ENCODE measurements at regions of chrX and their contacts with region 1.

Region 1: GRCh38 chrX:40735325-40736169 is at the start of gene MED14:
- DNase-seq: peak; percentile 78 to 98 (median 84)

Region 2: DNA sequence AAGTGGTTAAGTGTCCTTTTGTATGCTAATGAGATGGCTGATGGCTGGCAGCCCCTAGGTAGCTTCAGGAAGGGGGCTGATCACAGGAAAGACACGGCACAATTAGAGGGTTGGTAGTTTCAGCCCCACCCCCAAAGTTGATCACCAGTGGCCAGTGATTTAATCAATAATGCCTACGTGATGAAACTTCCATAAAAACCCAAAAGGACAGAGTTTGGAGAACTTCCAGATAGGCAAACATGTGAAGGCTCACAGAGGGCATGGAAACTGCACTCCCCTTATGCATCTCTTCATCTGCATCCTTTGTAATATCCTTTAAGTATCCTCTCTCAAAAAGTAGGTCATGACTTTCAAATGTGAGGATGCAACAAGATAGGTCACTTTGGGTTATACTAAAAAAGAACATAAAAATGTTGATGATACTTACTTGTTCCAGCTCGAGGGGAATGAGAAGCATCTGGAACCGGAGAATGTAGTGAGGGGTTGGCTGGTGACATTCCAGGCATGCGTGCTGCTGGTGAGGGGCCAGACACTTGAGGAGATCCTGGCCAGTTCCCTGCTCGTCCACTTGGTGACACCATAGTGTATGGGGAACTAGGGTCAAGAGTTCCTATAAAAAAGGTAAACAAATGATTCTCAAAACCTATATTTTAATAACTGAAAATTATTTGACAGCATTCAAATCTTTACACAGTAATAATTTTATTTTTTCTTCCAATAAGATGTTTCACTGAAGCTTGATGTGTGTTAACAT is 71.5 kb before region 1 on chrX:
- intact Hi-C with region 1: loop called (anchors 5 kb)
- DNase-seq: peak in 1 of 10 donors; percentile 29

Region 3: DNA sequence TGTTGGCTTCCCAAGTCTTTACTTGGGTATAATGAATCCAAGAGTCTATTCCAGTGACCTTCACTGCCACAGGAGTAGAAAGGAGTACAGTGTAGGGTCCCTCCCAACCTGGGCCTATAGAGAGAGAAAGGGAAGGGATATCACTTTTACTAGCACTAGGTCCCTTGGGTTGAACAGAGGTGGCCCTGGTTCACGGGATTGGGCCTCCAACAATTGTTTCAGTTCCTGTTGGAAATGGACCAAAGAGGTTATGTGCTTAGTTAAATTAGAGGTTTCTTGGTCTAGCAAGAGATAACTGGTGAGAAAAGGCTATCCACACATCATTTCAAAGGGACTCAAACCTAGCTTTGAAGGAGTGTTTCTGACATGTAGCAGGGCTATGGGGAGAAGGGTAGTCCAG is 56.9 kb after region 1 on chrX:
- intact Hi-C with region 1: loop called (anchors 10 kb)
- DNase-seq: no peak

Region 4: GRCh38 chrX:40867352-40867751 is 131.8 kb after region 1 on chrX:
- intact Hi-C with region 1: no loop called
- DNase-seq: no peak

Region 5: DNA sequence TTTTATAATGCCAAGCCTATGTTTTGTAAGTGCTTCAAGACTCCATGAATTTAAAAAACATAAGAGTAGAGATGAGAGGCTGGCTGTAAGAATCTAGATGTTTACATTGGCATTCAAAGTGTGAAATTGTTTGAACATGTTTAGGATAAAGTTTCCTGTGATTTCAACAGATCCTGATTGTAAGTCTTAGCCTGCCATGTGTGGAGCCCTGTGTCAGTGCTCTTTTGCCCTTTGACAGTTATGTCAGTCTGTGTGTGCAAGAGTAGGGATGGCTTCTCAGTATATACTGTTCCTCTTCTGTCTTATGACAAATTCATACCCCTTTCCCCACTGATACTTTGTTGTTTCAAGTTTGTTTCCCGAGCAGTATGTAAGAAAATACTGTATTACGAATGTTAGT is 417.9 kb after region 1 on chrX:
- intact Hi-C with region 1: no loop called
- DNase-seq: no peak

Measured in posterior cingulate gyrus (tissue), 11 donors.